Cardiac septum (tissue), 1 donor: ENCODE measurements at regions of chr3 and their contacts with region 1.

Region 1: GRCh38 chr3:17742108-17742879 is at the start of gene TBC1D5:
- DNase-seq: peak; percentile 97
- total RNA-seq, gene TBC1D5: 25.9 TPM

Region 2: DNA sequence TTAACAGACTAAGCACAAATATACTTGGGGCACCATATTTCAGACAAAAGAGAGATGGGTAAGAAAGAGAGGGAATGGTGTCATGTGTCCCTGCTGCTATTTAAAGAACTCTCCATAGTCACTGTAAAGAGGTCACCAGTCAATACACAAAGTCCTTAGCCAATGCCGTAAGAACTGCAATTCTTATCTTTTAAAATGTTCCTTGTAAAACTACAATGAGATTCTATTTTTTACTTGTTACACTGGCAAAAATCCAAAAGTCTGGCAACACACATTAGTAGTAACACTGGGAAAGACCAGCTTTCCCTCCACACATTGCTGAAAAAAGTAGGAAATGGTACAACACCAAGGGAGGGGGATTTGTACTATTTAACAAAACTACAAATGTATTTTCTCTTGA is 189.2 kb before region 1 on chr3:
- intact Hi-C with region 1: loop called (anchors 10 kb)
- DNase-seq: no peak

Region 3: GRCh38 chr3:17645072-17645698 is 97.1 kb before region 1 on chr3:
- intact Hi-C with region 1: loop called (anchors 2 kb)
- DNase-seq: no peak

Region 4: GRCh38 chr3:17655743-17656142 is 86.6 kb before region 1 on chr3:
- intact Hi-C with region 1: no loop called
- DNase-seq: no peak

Region 5: GRCh38 chr3:18740631-18741583 is 998.6 kb after region 1 on chr3:
- intact Hi-C with region 1: no loop called
- DNase-seq: no peak